ENCODE measurements at regions of chr14 and their contacts with region 1.

Region 1: DNA sequence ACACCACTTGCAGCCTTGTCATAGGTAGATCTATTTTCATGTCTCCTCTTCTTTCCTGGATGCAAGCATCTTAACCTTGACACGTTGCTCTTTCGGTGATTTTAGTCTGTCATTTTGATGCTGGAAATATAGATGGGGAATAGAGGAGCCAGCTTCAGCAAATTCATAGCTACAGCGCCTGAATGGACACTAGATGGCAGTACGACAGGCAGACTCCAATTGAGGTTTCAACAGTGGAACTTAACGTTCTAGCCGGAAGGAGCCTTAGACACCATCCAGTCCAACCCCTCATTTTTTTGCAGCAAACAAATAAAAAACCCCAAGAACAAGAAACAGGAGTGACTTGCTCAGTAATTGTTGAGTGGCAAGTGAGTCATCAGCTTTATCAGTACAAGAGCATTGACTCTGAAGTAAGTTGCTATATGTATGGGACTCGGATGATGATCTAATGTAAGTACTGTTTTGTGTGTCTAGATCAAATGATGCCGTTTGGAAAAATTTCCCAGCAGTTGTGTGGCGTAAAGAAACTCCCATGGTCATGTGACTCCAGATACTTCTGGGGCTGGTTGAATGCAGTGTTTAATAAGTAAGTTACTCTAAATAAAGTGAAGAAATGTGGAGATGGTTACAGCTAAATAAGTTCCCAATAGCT is 9.0 kb downstream of the DMAC2L start:
- DNase-seq: no peak
- H3K4me3 ChIP-seq: peak overlapping the region in 2 of 8 donors; percentile 7 to 50
- H3K27ac ChIP-seq: peak overlapping the region; percentile 11 to 79 (median 74)
- H3K4me1 ChIP-seq: peaks cover 10 to 45% (median 21%) of the 10 kb centered on the region in 6 donors
- H3K27me3 ChIP-seq: no peaks in the 10 kb centered on the region
- CTCF ChIP-seq: peak; percentile 66 to 91 (median 85)
- POLR2A ChIP-seq: no peak

Region 2: GRCh38 chr14:50532502-50533240 is 211.5 kb after region 1 on chr14 and contains the start of gene MAP4K5:
- intact Hi-C with region 1: loop called (anchors 2 kb)
- DNase-seq: peak; percentile 99
- H3K4me3 ChIP-seq: peak within 1 kb of the TSS; percentile 75 to 91 (median 84)
- H3K27ac ChIP-seq: peak within 1 kb of the TSS; percentile 87 to 98 (median 96)
- H3K4me1 ChIP-seq: peaks cover 26 to 60% (median 50%) of the 10 kb centered on the region in 6 donors
- H3K27me3 ChIP-seq: no peaks in the 10 kb centered on the region
- CTCF ChIP-seq: peak; percentile 76 to 98 (median 91)
- POLR2A ChIP-seq: no peak
- total RNA-seq, gene MAP4K5: 47.5 to 172 (median 57.9) TPM